Calu3 (cell line): ENCODE measurements at regions of chr4 and their contacts with region 1.

Region 1: DNA sequence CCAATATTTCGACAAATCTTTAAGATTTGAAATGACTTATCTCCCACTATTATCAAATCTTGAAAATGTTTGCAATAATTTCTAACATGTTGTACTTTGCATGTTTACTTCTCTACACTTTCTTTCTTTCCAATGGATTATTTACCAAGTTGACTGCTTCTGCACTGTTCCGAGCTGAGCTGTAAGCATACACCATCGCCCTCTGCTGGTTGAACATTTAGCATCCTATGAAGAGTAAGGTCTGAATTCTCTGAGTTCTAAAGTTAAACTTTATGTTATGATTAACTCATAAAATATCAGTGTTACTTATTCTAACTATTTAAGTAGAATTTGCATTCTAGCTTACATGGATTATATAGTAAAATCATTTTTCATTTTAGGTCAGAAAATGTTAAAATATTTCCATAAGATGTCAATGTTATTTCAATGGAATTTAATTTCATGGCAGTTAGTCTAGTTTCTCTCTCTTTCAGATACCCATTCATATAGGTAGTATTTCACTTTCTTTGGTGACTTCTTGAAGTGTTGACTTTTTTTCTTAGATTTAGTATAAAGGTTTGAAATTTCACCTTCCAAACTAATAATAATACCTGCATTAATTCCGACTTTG is 137.4 kb downstream of the DKK2 start:
- DNase-seq: peak; percentile 48
- H3K4me3 Mint-ChIP-seq: no peak overlapping the region
- H3K27ac Mint-ChIP-seq: no peak overlapping the region
- H3K4me1 Mint-ChIP-seq: no peaks in the 10 kb centered on the region
- H3K27me3 Mint-ChIP-seq: no peaks in the 10 kb centered on the region
- CTCF ChIP-seq: peak; percentile 28

Region 2: GRCh38 chr4:106329041-106329618 is 569.6 kb before region 1 on chr4:
- CTCF ChIA-PET with region 1: no interaction called
- intact Hi-C with region 1: loop called (anchors 5 kb)
- DNase-seq: no peak
- H3K4me3 Mint-ChIP-seq: no peak overlapping the region
- H3K27ac Mint-ChIP-seq: no peak overlapping the region
- H3K4me1 Mint-ChIP-seq: no peaks in the 10 kb centered on the region
- H3K27me3 Mint-ChIP-seq: no peaks in the 10 kb centered on the region
- CTCF ChIP-seq: peak; percentile 32

Region 3: DNA sequence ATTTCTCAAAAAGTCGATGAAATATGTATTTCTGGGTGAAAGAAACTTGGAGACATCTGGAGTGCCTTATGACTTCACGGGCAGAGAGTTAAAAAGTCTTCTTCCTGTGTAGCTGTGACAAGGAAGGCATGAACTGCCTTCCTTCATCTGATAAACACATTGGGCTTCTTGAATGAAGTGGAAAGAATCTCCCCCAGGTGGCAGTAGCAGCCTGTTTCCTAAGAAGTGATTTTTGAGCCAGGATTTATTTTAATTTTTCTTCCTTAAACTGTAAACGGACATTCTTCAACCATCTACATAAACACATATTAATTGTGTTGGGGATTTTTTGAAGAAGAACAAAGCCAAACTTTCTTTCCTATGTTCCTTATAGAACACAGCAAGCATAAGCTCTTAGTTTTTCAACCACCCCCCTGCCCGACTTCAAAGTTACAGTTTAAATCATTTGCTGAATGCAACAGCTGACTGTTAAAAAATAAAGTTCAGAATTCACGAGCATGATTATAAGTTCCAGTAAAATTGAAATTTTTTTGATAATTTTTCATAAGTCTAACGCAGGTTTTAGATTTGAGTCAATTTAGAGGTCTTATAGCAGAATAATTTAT is 529.2 kb before region 1 on chr4:
- CTCF ChIA-PET with region 1: no interaction called
- intact Hi-C with region 1: loop called (anchors 1 kb)
- DNase-seq: peak; percentile 43
- H3K4me3 Mint-ChIP-seq: no peak overlapping the region
- H3K27ac Mint-ChIP-seq: no peak overlapping the region
- H3K4me1 Mint-ChIP-seq: peaks cover 15% of the 10 kb centered on the region
- H3K27me3 Mint-ChIP-seq: no peaks in the 10 kb centered on the region
- CTCF ChIP-seq: peak; percentile 46

Region 4: DNA sequence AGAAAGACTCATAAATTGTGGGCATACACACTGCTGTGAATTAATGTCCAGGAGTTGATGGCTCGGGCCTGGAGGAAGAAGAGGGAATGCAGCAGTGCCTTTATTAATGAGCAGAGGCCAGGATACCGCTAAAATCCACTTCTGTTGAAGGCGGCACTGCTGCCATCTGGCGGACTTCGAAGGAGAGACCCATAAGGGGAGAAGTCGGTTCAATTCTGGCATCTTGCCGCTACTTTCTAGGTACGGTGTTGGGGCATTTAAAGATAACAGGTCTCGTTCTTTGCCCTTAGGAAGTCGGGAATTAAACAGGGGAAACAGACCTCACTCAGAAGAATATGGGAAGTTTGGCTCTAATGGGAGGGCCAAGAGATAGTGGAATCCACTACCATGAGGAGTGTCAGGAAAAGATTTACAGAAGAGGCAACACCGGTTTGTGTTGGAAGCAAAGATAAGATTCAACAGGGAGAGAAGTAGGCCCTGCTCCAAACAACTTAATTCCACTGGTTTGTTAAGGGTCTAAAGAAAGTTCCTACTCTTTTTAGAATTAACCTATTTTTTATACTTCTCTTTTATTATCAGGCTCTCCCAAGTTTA is 396.5 kb before region 1 on chr4:
- CTCF ChIA-PET with region 1: no interaction called
- intact Hi-C with region 1: loop called (anchors 5 kb)
- DNase-seq: peak; percentile 61
- H3K4me3 Mint-ChIP-seq: peak overlapping the region; percentile 14
- H3K27ac Mint-ChIP-seq: no peak overlapping the region
- H3K4me1 Mint-ChIP-seq: no peaks in the 10 kb centered on the region
- H3K27me3 Mint-ChIP-seq: no peaks in the 10 kb centered on the region
- CTCF ChIP-seq: peak; percentile 66

Region 5: DNA sequence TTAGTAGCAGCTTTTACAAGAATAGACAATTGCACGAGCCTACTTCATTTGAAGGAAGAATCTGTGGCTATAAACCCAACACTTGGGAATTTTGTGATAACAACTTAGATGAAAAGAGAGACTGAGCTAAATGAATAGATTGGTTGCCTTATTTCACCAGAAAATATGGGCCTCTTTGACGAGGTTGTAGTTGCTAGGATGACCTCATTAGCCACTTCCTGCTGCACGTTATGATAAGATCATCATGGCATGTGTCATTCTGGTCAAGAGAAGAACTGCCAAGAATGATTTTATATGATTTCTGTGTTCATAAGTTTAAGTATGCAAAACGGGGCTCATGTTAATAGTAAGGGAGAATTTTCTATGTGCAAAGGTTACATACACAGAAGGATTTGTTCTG is 208.2 kb before region 1 on chr4:
- CTCF ChIA-PET with region 1: no interaction called
- intact Hi-C with region 1: loop called (anchors 10 kb)
- DNase-seq: no peak
- H3K4me3 Mint-ChIP-seq: no peak overlapping the region
- H3K27ac Mint-ChIP-seq: no peak overlapping the region
- H3K4me1 Mint-ChIP-seq: no peaks in the 10 kb centered on the region
- H3K27me3 Mint-ChIP-seq: no peaks in the 10 kb centered on the region
- CTCF ChIP-seq: no peak

Region 6: GRCh38 chr4:106753426-106753825 is 145.3 kb before region 1 on chr4:
- CTCF ChIA-PET with region 1: no interaction called
- intact Hi-C with region 1: no loop called
- DNase-seq: no peak
- H3K4me3 Mint-ChIP-seq: no peak overlapping the region
- H3K27ac Mint-ChIP-seq: no peak overlapping the region
- H3K4me1 Mint-ChIP-seq: no peaks in the 10 kb centered on the region
- H3K27me3 Mint-ChIP-seq: no peaks in the 10 kb centered on the region
- CTCF ChIP-seq: no peak

Region 7: GRCh38 chr4:106818764-106819163 is 80.0 kb before region 1 on chr4:
- CTCF ChIA-PET with region 1: no interaction called
- intact Hi-C with region 1: loop called (anchors 5 kb)
- DNase-seq: no peak
- H3K4me3 Mint-ChIP-seq: no peak overlapping the region
- H3K27ac Mint-ChIP-seq: no peak overlapping the region
- H3K4me1 Mint-ChIP-seq: no peaks in the 10 kb centered on the region
- H3K27me3 Mint-ChIP-seq: no peaks in the 10 kb centered on the region
- CTCF ChIP-seq: no peak